Panc1 (cell line): ENCODE measurements at regions of chr1 and their contacts with region 1.

Region 1: DNA sequence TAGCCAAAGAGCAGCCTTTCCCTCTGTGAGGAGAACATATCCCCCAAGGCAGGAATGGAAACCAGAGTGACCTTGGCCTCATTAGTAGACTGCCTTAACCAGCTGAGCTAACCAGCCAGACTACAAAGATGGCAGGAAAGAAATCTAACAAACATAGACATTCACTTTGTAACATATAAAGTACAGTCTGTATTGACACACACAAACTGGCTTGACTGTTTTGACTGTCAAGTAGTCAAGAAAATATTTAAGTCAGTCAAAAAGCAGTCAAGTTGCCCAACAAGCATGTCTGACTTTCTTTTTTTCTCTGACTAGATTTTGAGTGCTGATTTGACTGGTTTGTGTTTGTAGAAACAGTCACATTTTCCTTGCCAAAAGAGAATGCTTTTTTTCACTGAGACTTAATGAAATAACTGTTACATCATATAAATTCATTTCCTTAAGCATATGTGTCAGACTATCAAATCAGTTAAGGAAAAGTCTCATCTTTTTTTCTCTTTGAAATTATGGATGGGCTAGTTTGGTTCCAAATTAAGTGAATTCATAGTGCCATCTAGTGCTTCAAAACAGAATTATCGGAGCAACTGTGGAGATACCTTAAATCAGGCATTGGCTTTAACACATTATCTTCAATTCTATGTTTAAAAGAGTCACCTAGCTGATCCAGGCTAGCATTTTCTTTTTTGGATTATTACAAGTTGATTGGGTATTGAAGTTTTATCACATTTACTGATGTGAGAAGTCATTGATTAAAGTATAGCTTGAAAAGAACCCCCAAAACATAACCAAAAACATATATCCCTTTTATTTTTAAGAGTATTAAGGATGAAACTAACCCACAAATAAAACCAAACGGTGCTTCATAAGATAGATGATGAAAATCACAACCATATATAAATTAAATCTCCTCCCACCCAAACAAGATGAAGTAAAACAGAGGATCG is 75.0 kb downstream of the ATP6V1G3 start:
- DNase-seq: peak; percentile 35
- ATAC-seq: peak; percentile 70; the same call in 1 of the 2 replicates
- H3K4me3 ChIP-seq: no peak overlapping the region
- H3K27ac ChIP-seq: peak overlapping the region; percentile 48; the same call in 1 of the 2 replicates
- H3K4me1 ChIP-seq: peaks cover 10% of the 10 kb centered on the region; the same call in 1 of the 2 replicates
- H3K27me3 ChIP-seq: no peaks in the 10 kb centered on the region
- CTCF ChIP-seq: peak; percentile 63; the same call in 1 of the 2 replicates

Region 2: DNA sequence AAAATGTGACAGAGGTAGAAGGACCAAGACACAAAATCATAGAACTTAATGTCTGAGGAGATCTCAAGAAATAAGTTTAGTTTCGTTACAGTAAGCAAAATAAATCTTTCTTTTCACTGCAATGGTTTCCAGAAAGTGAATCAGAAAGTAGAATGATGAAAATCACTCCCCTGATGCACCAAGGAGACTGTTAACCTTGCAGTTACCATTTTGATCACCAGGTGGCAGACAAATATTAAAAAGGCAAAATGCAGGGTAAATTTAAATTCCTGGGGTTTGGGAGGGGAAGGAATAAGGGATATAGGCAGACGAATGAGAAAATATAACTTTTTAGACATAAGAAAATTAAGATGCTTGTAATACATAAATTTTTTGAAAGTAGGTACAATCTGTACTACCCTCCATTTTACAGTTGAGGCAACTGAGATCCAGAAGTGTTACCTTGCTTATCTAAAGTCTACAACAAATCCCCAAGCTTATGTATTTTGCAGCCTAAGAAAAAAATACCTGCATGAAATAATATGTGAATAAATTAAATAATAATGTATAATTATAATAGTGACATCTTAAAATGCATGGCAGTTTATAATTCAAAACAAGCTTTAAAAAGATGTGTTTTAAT is 944.2 kb before region 1 on chr1:
- CTCF ChIA-PET with region 1: no interaction called
- POLR2A ChIA-PET with region 1: no interaction called
- in situ Hi-C with region 1: no loop called
- intact Hi-C with region 1: loop called (anchors 10 kb)
- DNase-seq: no peak
- ATAC-seq: no peak; the same call in 1 of the 2 replicates
- H3K4me3 ChIP-seq: no peak overlapping the region
- H3K27ac ChIP-seq: no peak overlapping the region
- H3K4me1 ChIP-seq: no peaks in the 10 kb centered on the region
- H3K27me3 ChIP-seq: no peaks in the 10 kb centered on the region
- CTCF ChIP-seq: peak; percentile 70; the same call in 1 of the 2 replicates

Region 3: DNA sequence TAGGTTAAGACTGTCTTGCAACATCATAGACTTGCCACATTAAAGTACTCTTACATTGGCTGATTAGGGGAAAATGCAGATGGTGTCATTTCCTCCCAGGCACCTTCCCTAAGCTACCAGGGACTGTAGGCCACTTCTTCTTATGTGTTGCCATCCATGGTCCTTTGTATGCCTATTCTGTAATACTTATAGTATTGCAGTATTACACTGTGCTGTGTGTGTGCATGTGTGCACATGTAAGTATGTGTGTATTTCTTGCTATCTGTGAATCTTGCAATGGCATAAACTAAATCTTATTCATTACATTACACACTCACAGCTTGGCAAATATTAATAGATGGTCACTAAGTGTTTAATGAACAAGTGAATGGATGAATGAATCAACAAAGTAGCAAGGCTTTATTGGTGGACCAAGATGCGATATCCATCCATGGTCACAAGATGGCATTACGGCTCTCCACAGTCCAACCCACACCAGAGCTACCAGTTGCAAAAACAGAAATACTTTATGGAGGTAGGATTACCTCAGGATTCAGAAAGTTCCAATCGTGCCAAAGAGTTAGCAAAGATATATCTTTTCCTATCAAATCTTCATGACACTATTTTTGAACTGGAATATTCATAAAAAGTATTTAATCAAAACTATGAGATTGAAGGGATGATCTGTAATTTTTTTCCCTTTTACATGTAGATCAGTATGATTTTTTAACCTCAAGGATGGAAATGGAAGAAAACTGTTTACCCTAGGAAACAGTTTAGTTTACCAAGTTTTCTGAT is 850.4 kb before region 1 on chr1:
- CTCF ChIA-PET with region 1: no interaction called
- POLR2A ChIA-PET with region 1: no interaction called
- in situ Hi-C with region 1: no loop called
- intact Hi-C with region 1: loop called (anchors 5 kb)
- DNase-seq: no peak
- ATAC-seq: peak; percentile 95
- H3K4me3 ChIP-seq: no peak overlapping the region
- H3K27ac ChIP-seq: no peak overlapping the region
- H3K4me1 ChIP-seq: 0 out of 2 replicates have a peak, but pooled peaks cover 4% of the 10 kb centered on the region
- H3K27me3 ChIP-seq: no peaks in the 10 kb centered on the region
- CTCF ChIP-seq: peak; percentile 80

Region 4: GRCh38 chr1:197924516-197925123 is 540.9 kb before region 1 on chr1:
- CTCF ChIA-PET with region 1: no interaction called
- POLR2A ChIA-PET with region 1: no interaction called
- in situ Hi-C with region 1: no loop called
- intact Hi-C with region 1: loop called (anchors 10 kb)
- DNase-seq: no peak
- ATAC-seq: peak; percentile 82
- H3K4me3 ChIP-seq: no peak overlapping the region
- H3K27ac ChIP-seq: no peak overlapping the region
- H3K4me1 ChIP-seq: no peaks in the 10 kb centered on the region; the same call in 1 of the 2 replicates
- H3K27me3 ChIP-seq: peaks cover 9% of the 10 kb centered on the region
- CTCF ChIP-seq: peak; percentile 74

Region 5: DNA sequence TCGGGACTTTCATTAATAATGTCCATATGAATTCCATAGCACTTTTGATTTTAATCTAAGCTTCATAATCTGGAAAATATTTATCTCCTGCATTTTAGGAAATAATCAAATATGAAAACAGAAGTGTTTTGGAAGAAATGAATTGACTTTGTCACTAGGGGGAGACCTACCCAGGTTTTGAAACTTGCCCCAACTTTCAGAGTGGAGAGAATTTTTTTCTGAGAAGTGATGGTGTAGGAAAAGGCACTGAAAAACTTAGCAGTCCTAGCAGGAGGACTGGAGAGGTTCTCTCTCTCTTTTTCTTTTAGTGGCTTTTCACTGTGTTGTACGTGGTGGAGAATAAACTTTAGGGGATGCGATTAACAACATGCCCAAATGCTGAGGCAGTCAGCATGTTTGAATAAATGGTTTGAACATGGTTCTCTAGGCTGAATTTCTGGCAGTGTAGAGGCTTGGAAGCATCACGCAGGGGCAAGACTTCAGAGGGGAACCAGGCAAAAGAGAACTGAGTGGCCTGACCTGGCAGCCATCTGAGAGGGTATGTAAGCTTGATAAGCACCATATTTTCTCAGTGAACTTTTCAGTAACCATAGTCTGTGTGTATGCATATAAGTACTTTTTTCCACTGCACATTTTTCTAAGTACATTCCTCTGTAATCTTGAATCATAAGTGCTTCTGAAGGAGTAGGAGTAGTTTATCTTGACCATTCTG is 377.0 kb before region 1 on chr1:
- CTCF ChIA-PET with region 1: no interaction called
- POLR2A ChIA-PET with region 1: no interaction called
- in situ Hi-C with region 1: no loop called
- intact Hi-C with region 1: loop called (anchors 5 kb)
- DNase-seq: peak; percentile 27
- ATAC-seq: peak; percentile 53
- H3K4me3 ChIP-seq: no peak overlapping the region
- H3K27ac ChIP-seq: no peak overlapping the region
- H3K4me1 ChIP-seq: no peaks in the 10 kb centered on the region
- H3K27me3 ChIP-seq: no peaks in the 10 kb centered on the region
- CTCF ChIP-seq: peak; percentile 76

Region 6: GRCh38 chr1:198157241-198157846 is 308.1 kb before region 1 on chr1:
- CTCF ChIA-PET with region 1: no interaction called
- POLR2A ChIA-PET with region 1: no interaction called
- in situ Hi-C with region 1: no loop called
- intact Hi-C with region 1: loop called (anchors 10 kb)
- DNase-seq: peak; percentile 70
- ATAC-seq: peak; percentile 80
- H3K4me3 ChIP-seq: peak overlapping the region; percentile 87 to 88
- H3K27ac ChIP-seq: peak overlapping the region; percentile 99
- H3K4me1 ChIP-seq: peaks cover 33% of the 10 kb centered on the region
- H3K27me3 ChIP-seq: no peaks in the 10 kb centered on the region
- CTCF ChIP-seq: no peak

Region 7: GRCh38 chr1:198681831-198682759 is 216.6 kb after region 1 on chr1:
- CTCF ChIA-PET with region 1: interaction called, 3 read pairs
- POLR2A ChIA-PET with region 1: no interaction called
- in situ Hi-C with region 1: no loop called
- intact Hi-C with region 1: loop called (anchors 5 kb)
- DNase-seq: no peak
- ATAC-seq: peak; percentile 96
- H3K4me3 ChIP-seq: peak overlapping the region; percentile 15 to 41
- H3K27ac ChIP-seq: peak overlapping the region; percentile 80
- H3K4me1 ChIP-seq: peaks cover 15% of the 10 kb centered on the region
- H3K27me3 ChIP-seq: no peaks in the 10 kb centered on the region
- CTCF ChIP-seq: no peak